Transverse colon (tissue), 4 donors: ENCODE measurements at regions of chr7 and their contacts with region 1.

Region 1: DNA sequence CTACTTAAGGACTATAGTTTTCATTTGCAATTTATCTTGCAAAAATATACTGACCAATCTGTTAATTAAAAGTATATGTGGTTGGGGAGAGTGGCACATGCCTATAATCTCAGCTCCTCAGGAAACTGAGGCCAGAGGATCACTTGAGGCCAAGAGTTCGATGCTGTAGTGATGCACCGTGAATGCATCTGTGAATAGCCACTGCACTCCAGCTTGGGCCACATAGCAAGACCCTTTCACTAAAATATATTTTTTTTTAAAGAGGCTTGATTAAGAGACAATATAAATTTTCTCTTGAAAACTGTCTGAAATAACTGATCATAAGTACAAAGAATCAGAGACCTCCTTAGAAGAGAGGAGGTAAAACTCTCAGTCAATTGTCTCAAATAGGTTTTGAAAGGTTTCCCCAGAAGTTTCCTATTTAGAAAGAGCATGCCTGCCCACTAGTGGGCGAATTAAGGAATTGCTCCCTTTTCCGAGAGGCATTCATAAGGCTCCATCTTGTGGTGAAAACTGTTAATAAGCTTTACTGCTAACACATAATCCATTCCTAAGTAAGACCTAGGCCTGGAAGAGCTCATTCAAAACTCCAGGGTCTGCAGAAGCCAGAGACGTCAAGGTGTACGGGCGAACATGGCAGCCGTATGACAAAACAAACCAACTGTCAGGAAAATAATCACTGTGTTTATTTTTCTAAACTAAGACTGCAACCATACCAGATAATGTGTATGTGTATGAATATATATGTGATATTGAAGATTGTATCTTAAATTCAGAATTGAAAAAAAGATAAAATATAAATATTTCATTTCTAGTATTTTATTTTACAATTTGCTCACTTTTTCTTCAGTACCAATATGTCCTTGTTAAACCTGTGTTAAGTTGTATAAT is 6.8 kb upstream of the TAS2R40 start:
- DNase-seq: peak; percentile 64
- H3K4me3 ChIP-seq: no peak overlapping the region
- H3K27ac ChIP-seq: no peak overlapping the region
- H3K4me1 ChIP-seq: no peaks in the 10 kb centered on the region
- H3K27me3 ChIP-seq: no peaks in the 10 kb centered on the region
- CTCF ChIP-seq: peak; percentile 98 to 99 (median 99)
- EP300 ChIP-seq: no peak
- POLR2A ChIP-seq: no peak

Region 2: DNA sequence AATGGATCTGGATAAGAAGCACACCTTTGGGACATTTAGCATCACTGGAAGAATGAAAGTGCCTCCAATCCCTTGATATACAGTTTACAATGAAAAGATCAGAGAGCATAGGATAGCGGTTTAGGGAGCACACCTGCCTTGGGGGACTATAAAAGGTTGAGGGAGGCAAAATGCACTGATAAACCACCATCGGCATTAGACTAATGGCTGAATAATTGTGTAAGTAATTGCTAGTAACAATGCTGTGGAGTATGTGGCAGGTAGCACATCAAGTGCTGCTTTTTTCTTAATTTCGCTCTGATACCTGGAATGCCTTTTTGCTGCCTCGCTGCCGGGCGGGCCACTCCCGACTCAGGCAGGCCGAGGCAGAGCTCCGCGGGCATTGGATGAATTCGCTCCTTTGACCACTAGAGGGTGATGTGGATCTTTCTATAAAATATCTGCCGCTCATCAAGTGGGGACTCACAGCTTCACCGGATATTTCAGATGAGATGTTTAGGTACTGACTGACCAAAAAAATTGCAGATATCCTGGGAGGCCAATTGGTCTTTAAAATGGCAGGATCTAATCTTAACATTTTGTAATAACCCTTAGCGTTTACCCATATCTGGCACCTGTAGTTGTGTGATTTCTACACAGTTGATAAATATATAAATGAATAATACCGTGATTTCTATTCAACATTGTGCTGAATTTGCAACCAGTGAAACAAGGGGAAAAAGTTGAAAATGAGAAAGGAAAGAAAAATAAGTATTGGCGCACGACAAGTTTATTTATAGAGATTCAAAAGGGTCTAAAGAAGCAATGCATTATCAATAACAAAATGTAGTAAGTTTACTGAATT is 582.5 kb before region 1 on chr7:
- in situ Hi-C with region 1: loop called in 1 of 4 experiments (anchors 25 kb)
- intact Hi-C with region 1: no loop called
- DNase-seq: peak; percentile 54
- H3K4me3 ChIP-seq: no peak overlapping the region
- H3K27ac ChIP-seq: no peak overlapping the region
- H3K4me1 ChIP-seq: no peaks in the 10 kb centered on the region
- H3K27me3 ChIP-seq: peaks cover 37% of the 10 kb centered on the region
- CTCF ChIP-seq: peak; percentile 66 to 77 (median 71)
- EP300 ChIP-seq: no peak
- POLR2A ChIP-seq: no peak

Region 3: DNA sequence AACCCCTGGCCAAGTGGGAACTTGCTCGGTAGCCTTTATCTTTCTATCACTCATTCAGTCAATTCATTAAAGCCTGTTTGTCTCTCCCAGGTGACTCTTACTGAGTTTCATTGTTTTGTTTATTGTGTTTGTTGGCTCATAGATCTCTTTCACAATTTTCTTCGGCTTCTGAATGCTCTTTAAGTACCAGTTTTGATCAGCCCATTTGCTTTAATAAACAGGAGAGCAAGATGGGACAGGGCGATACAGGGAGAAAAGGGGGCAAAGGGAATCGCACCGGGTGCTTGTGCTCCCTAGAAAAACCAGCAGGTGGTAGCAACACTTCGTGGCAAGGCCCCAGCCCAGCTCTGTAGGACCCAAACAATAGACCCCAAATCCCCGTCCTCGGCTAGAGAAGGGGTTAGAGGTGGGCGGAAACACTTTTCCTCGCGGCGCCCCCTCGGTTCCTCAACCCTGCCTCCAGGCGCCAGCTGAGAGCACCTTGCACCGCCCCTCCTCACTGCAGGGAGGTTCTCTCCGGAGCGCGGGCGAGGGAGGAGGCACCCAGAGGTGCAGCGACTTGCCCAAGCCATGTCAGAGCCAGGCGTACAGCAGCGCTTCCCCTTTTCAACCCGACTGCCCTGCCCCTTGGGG is 361.2 kb before region 1 on chr7:
- in situ Hi-C with region 1: loop called in 3 of 4 experiments (anchors 25 kb)
- intact Hi-C with region 1: no loop called
- DNase-seq: peak; percentile 70
- H3K4me3 ChIP-seq: peak overlapping the region; percentile 33 to 74 (median 52)
- H3K27ac ChIP-seq: peak overlapping the region; percentile 67 to 76 (median 70)
- H3K4me1 ChIP-seq: peaks cover 0 to 10% (median 4%) of the 10 kb centered on the region in 4 donors
- H3K27me3 ChIP-seq: peaks cover 3% of the 10 kb centered on the region
- CTCF ChIP-seq: peak; percentile 70 to 78 (median 73)
- EP300 ChIP-seq: no peak
- POLR2A ChIP-seq: no peak

Region 4: DNA sequence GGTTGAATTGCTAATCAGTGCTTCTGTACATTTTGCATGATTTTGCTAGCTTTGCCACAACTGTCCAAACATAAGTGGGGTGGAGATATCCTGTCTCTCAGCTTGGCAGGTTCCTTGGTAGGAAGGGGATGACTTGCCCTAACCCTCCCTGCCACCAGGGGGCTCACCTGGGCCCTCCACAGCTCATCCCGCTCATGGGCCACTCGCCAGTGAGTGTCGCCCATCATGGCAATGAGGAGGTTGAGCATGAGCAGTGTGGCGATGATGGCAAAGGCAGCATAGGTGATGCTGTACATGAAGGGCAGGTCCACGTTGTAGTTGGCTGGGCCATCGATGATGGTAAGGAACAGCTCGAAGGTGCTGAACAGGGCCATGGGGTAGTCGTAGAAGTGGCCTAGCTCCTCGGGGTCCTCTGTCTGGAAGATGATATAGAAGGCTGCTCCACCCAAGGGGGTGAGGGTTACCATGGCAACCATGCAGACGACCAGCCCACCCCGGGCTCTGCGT is 341.7 kb before region 1 on chr7:
- in situ Hi-C with region 1: loop called (anchors 25 kb)
- intact Hi-C with region 1: loop called (anchors 10 kb)
- DNase-seq: no peak
- H3K4me3 ChIP-seq: no peak overlapping the region
- H3K27ac ChIP-seq: no peak overlapping the region
- H3K4me1 ChIP-seq: no peaks in the 10 kb centered on the region
- H3K27me3 ChIP-seq: no peaks in the 10 kb centered on the region
- CTCF ChIP-seq: peak in 4 of 5 experiments; percentile 11 to 30 (median 20)
- EP300 ChIP-seq: no peak
- POLR2A ChIP-seq: no peak

Region 5: DNA sequence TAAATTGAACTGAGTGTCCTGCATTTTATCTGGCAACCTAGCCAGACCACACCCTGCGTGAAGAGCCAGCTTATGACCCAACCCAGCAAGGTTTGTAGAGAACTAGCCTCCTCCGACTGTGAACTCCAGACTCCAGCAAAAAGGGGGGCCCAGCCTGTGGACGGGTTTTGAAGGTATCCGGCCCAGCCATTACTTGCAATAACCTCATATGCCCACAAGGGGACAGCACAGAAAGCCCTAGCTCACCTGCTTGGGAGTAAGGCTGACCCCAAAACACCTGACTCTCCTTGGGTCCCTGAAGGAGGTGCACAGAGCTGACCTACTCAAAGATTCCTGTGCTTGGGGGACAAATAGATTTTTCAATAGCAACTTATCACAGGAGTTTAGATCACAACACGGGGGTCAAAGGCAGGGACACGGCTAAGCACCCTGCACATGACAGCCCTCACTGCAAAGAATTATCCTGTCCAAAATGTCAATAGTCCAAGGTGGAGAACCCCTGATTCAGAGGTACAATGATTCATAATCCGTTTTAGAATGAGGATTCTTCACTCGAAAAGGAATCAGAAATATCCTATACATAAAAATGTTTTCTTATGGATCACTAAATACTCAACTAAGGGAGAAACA is 334.0 kb before region 1 on chr7:
- in situ Hi-C with region 1: loop called in 1 of 4 experiments (anchors 25 kb)
- intact Hi-C with region 1: loop called (anchors 10 kb)
- DNase-seq: no peak
- H3K4me3 ChIP-seq: no peak overlapping the region
- H3K27ac ChIP-seq: no peak overlapping the region
- H3K4me1 ChIP-seq: no peaks in the 10 kb centered on the region
- H3K27me3 ChIP-seq: no peaks in the 10 kb centered on the region
- CTCF ChIP-seq: peak; percentile 61 to 76 (median 67)
- EP300 ChIP-seq: no peak
- POLR2A ChIP-seq: no peak

Region 6: DNA sequence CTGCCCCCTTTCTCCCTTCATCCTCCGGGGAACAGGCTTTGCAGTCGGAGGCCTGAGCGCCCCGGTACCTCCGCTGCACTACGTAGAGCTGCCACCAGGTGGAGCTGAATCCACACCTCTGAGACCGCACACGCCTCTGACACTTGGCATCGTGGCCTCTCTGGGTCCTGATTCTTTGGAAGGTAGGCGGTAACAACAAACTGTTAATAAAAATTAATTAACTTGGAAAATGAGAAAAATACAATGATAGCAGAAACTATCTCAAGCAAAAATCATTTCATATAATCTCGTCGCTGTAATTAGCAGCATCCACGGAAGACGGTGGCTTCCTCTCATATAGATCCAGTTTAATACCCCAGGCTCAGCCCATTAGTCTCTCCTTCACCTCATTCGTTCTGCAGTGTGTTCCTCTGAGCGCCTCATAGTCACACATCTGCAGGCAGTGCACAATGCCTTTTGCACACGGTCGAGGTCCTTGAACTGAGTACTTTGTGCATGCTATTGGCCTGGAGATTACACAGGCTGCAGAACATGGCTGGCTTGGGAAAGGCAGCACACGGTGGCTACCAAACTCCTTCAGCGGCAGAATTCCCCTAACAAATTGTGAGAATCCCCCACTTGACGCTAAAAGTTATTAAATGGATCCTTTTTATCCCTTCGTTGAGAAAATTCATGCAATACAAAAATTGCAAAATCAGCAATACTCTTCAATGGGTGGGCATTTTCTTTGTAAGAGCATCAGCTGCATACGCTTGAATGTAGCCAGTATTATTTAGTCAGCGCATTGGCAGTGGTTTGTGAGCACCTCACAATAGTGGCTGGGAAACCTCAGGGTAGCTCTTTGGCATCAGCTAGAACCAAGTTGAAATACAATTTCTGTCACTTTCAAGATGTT is 206.8 kb before region 1 on chr7:
- in situ Hi-C with region 1: loop called (anchors 5 kb)
- intact Hi-C with region 1: loop called (anchors 2 kb)
- DNase-seq: peak; percentile 80
- H3K4me3 ChIP-seq: no peak overlapping the region
- H3K27ac ChIP-seq: no peak overlapping the region
- H3K4me1 ChIP-seq: peaks cover 0 to 5% (median under 1%) of the 10 kb centered on the region in 4 donors
- H3K27me3 ChIP-seq: peaks cover 6% of the 10 kb centered on the region
- CTCF ChIP-seq: peak; percentile 94 to 96 (median 95)
- EP300 ChIP-seq: no peak
- POLR2A ChIP-seq: no peak

Region 7: GRCh38 chr7:143013893-143014292 is 201.1 kb before region 1 on chr7:
- in situ Hi-C with region 1: loop called (anchors 5 kb)
- intact Hi-C with region 1: loop called (anchors 2 kb)
- DNase-seq: no peak
- H3K4me3 ChIP-seq: no peak overlapping the region
- H3K27ac ChIP-seq: peak overlapping the region in 3 of 4 donors; percentile 46 to 63 (median 61)
- H3K4me1 ChIP-seq: peaks cover 0 to 8% (median 0%) of the 10 kb centered on the region in 4 donors
- H3K27me3 ChIP-seq: no peaks in the 10 kb centered on the region
- CTCF ChIP-seq: no peak
- EP300 ChIP-seq: peak; percentile 16
- POLR2A ChIP-seq: no peak